ENCODE measurements at regions of chr10 and their contacts with region 1.

Region 1: GRCh38 chr10:84537447-84537931 is 209.1 kb downstream of the CCSER2 start:
- H3K4me3 ChIP-seq: no peak overlapping the region
- H3K27ac ChIP-seq: no peak overlapping the region
- H3K4me1 ChIP-seq: no peaks in the 10 kb centered on the region
- CTCF ChIP-seq: peak; percentile 66

Region 2: DNA sequence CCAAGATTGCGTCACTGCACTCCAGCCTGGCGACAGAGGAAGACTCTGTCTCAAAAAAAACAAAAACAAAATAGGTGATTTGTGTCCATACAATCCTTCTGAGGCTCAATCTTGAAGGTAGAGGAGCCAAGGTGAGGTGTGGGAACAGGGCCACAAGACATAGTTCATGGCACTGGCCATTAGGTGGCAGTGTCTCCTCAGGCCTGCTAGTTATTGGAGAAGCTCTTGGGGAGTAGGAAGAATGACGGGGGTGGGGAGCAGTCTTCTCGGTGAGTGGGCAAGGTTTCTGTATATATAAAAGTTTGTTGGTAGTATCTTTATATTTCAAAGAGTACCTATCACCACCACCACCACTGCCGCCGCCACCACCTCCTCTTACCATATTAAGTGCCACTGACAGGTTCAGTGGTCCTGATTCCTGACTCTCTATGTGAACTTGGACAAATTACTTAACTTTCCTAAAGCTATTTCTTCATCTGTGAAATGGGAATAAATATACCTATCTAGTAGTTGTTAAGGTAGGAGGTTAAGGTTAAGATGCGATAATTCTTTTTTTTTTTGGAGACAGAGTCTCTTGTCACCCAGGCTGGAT is 185.1 kb before region 1 on chr10:
- CTCF ChIA-PET with region 1: interaction called, 17 read pairs
- POLR2A ChIA-PET with region 1: no interaction called
- H3K4me3 ChIP-seq: no peak overlapping the region
- H3K27ac ChIP-seq: no peak overlapping the region
- H3K4me1 ChIP-seq: peaks cover 11% of the 10 kb centered on the region; the same call in 1 of the 2 replicates
- CTCF ChIP-seq: peak; percentile 50

Region 3: GRCh38 chr10:84375011-84375410 is 162.5 kb before region 1 on chr10:
- CTCF ChIA-PET with region 1: interaction called, 88 read pairs
- POLR2A ChIA-PET with region 1: no interaction called
- H3K4me3 ChIP-seq: no peak overlapping the region
- H3K27ac ChIP-seq: no peak overlapping the region
- H3K4me1 ChIP-seq: no peaks in the 10 kb centered on the region
- CTCF ChIP-seq: peak; percentile 39; the same call in 1 of the 2 replicates

Region 4: DNA sequence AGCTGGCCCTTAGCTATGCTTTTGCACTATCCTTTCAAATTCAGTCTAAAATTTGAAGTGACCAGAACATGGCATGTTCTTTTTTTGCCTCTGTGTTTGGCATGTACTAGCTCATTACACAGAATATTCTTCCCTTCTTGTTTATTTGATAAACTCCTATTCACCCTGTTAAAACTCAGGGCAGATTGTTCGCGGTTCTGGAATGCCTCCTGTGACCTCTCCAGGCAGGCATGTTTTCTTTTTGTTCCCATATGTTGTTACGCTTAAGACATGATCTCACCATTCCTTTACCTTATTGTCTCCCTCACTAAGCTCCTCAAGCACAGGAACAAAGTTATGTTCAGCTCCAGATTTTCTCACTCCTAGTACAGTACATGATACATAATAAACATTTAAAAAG is 27.4 kb before region 1 on chr10:
- CTCF ChIA-PET with region 1: interaction called, 10 read pairs
- POLR2A ChIA-PET with region 1: no interaction called
- H3K4me3 ChIP-seq: no peak overlapping the region
- H3K27ac ChIP-seq: no peak overlapping the region
- H3K4me1 ChIP-seq: no peaks in the 10 kb centered on the region
- CTCF ChIP-seq: no peak

Region 5: DNA sequence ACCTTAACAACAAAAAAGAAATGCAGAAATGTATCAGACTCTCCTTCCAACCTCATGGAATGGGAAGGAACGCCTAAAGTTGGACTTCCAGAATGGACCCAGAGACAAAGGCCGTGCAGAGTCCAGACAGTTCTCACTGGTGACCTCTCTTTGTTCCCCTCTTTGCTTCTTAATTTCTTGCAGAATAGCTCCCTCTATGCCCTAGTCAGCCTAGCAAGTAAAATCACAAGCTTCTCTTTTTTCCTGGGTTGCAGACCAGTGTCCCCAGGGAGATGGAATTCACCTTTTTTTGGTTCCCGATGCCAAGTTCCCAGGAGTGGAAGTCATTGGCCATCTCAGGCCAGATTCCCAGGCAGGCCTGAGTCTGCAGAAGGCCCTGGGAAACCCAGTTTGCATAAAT is 68.9 kb after region 1 on chr10:
- CTCF ChIA-PET with region 1: interaction called, 11 read pairs
- POLR2A ChIA-PET with region 1: no interaction called
- H3K4me3 ChIP-seq: no peak overlapping the region
- H3K27ac ChIP-seq: no peak overlapping the region
- H3K4me1 ChIP-seq: no peaks in the 10 kb centered on the region
- CTCF ChIP-seq: no peak; the same call in 1 of the 2 replicates

Region 6: GRCh38 chr10:84715911-84716310 is 178.4 kb after region 1 on chr10:
- CTCF ChIA-PET with region 1: interaction called, 12 read pairs
- POLR2A ChIA-PET with region 1: no interaction called
- H3K4me3 ChIP-seq: no peak overlapping the region
- H3K27ac ChIP-seq: no peak overlapping the region
- H3K4me1 ChIP-seq: no peaks in the 10 kb centered on the region
- CTCF ChIP-seq: peak; percentile 34; the same call in 1 of the 2 replicates

Region 7: DNA sequence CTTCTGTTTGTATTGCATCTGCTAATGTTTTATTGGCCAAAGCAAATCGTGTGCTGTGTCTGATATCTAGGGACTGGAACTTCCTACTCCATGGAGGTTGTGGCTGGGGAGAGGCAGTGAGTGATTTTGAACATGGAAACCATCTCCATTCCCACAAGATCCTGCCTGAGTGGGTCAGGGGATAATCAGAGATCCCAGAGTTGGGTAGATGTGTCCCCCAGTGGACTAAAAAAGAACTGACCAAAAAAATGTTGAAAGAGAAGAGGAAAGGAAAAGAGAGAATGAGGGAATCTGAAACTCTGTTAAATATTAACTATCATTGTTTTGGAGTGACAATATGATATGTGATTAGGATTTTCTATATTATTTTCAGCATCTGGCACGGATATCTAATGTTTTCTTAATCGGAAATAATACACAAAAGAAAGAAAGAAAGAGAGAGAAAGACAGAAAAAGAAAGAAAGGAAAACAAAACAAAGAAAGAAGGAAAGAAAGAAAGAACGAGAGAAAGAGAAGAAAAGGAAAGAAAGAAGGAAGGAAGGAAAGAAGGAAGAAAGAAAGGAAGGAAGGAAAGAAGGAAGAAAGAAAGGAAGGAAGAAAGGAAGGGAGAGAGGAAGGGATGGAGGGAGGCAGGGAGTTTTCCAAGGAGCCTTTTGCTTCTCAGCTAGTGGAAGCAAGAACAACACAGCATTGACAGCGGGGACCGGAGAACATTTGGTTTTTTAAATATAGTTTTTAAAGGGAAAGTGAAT is 429.4 kb after region 1 on chr10:
- CTCF ChIA-PET with region 1: no interaction called
- POLR2A ChIA-PET with region 1: no interaction called
- H3K4me3 ChIP-seq: no peak overlapping the region
- H3K27ac ChIP-seq: no peak overlapping the region
- H3K4me1 ChIP-seq: no peaks in the 10 kb centered on the region
- CTCF ChIP-seq: no peak

Measured in HEK293 (cell line).